ENCODE measurements at regions of chr7 and their contacts with region 1.

Region 1: GRCh38 chr7:27160546-27161213 is 4.2 kb upstream of the HOXA7 start:
- DNase-seq: peak; percentile 91
- ATAC-seq: peak; percentile 84
- H3K4me3 ChIP-seq: peak overlapping the region; percentile 24 to 76 (median 62)
- H3K4me3 Mint-ChIP-seq: peak overlapping the region; percentile 86
- H3K27ac ChIP-seq: no peak overlapping the region
- H3K27ac Mint-ChIP-seq: peak overlapping the region; percentile 67
- H3K4me1 ChIP-seq: peaks cover 49 to 57% of the 10 kb centered on the region in 2 donors
- H3K4me1 Mint-ChIP-seq: peaks cover 38% of the 10 kb centered on the region
- H3K27me3 ChIP-seq: peaks cover 1 to 88% (median 75%) of the 10 kb centered on the region in 4 experiments
- H3K27me3 Mint-ChIP-seq: peaks cover 70% of the 10 kb centered on the region
- CTCF ChIP-seq: peak; percentile 100

Region 2: GRCh38 chr7:25857376-25857921 is 1303.2 kb before region 1 on chr7:
- CTCF ChIA-PET with region 1: interaction called, 4 read pairs
- POLR2A ChIA-PET with region 1: interaction called, 3 read pairs
- intact Hi-C with region 1: loop called (anchors 2 kb)
- DNase-seq: no peak
- ATAC-seq: no peak
- H3K4me3 ChIP-seq: peak overlapping the region in 1 of 5 experiments; percentile 35
- H3K4me3 Mint-ChIP-seq: no peak overlapping the region
- H3K27ac ChIP-seq: no peak overlapping the region
- H3K27ac Mint-ChIP-seq: no peak overlapping the region
- H3K4me1 ChIP-seq: peaks cover 22 to 59% of the 10 kb centered on the region in 2 donors
- H3K4me1 Mint-ChIP-seq: peaks cover 8% of the 10 kb centered on the region
- H3K27me3 ChIP-seq: peaks cover 0 to 95% (median 89%) of the 10 kb centered on the region in 4 experiments
- H3K27me3 Mint-ChIP-seq: peaks cover 37% of the 10 kb centered on the region
- CTCF ChIP-seq: no peak

Region 3: DNA sequence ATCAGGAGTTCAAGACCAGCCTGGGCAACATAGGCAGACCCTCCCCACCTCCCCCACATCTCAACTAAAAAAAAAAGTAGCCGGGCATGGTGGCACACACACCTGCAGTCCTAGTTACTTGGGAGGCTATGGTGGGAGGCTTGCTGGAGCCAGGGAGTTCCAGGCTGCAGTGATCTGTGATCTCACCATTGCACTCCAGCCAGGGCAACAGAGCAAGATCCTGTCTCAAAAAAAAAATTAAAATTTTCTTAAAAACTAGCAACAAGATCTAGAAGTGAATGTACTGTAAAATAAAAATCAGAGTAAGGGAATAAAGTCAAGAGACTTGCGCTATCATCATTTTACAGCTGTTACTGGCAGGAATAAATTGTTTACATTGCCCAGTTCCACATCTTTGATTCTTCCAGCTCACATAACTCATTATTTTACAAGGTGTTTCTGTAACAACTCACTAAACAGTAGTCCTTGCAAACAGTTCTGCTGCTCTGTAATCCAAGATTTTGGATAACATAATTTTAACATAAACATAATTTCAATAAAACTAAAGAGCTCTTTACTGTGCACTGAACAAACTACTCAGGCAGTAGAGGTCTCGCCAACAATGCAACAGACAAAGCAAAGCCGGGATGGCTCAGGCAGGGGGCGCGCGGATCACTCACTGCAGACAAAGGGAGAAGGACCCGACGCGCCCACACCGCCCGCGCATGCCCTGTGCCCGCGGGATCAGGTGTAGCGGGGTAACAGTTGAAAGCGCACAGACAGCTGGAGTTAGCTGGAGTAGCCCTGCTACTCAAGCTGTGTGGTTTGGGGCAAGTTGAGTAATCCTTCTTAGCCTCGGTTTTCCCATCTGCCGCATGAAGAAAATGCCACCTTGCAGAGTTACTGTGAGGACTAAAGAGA is 1082.0 kb before region 1 on chr7:
- CTCF ChIA-PET with region 1: interaction called, 5 read pairs
- POLR2A ChIA-PET with region 1: no interaction called
- intact Hi-C with region 1: loop called (anchors 5 kb)
- DNase-seq: peak; percentile 88
- ATAC-seq: peak; percentile 100
- H3K4me3 ChIP-seq: no peak overlapping the region
- H3K4me3 Mint-ChIP-seq: peak overlapping the region; percentile 35
- H3K27ac ChIP-seq: no peak overlapping the region
- H3K27ac Mint-ChIP-seq: no peak overlapping the region
- H3K4me1 ChIP-seq: peaks cover 6 to 9% of the 10 kb centered on the region in 2 donors
- H3K4me1 Mint-ChIP-seq: peaks cover 9% of the 10 kb centered on the region
- H3K27me3 ChIP-seq: peaks cover 0 to 31% (median 14%) of the 10 kb centered on the region in 4 experiments
- H3K27me3 Mint-ChIP-seq: peaks cover 53% of the 10 kb centered on the region
- CTCF ChIP-seq: peak; percentile 71

Region 4: DNA sequence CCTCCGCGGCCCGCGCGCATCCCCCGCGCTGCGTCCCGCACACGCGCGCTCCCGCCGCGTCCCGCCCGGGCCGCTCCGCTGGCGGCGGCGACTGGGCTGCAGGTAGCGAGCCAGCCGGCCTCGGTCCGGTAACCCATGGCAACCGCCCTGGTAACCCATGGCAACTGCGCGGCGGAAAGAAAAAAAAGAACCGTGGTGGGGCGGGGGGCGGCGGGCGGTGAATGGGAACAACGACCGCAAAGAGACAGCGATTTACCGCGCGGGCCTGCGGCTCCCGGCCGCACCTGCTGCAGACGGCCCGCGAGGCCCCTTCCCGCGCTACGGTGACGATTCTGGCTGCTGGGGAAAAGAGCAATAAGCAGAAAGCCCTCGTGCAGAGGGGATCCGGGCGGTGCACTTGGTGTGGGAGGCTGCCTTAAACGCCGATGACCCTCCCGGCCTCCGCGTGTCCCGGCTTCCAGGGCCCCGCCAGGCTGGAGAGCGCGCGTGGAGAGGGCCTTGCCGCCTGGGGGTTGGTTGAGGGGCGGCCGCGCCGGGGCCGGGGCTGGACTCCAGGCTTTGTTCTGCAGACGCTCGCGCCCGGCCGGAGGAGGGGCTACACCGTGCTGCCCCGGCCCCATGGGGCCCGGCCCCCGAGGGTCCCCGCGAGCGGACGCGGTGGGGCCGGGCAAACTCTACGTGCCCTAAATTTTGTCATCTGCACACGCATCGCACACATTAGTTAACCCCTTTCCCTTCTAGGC is 784.3 kb before region 1 on chr7:
- CTCF ChIA-PET with region 1: interaction called, 122 read pairs
- POLR2A ChIA-PET with region 1: no interaction called
- intact Hi-C with region 1: loop called (anchors 1 kb)
- DNase-seq: peak; percentile 80
- ATAC-seq: peak; percentile 54
- H3K4me3 ChIP-seq: peak overlapping the region; percentile 34 to 69 (median 58)
- H3K4me3 Mint-ChIP-seq: peak overlapping the region; percentile 87
- H3K27ac ChIP-seq: no peak overlapping the region
- H3K27ac Mint-ChIP-seq: no peak overlapping the region
- H3K4me1 ChIP-seq: peaks cover 8 to 9% of the 10 kb centered on the region in 2 donors
- H3K4me1 Mint-ChIP-seq: peaks cover 6% of the 10 kb centered on the region
- H3K27me3 ChIP-seq: peaks cover 0 to 16% (median 2%) of the 10 kb centered on the region in 4 experiments
- H3K27me3 Mint-ChIP-seq: no peaks in the 10 kb centered on the region
- CTCF ChIP-seq: no peak

Region 5: GRCh38 chr7:26686448-26686981 is 474.2 kb before region 1 on chr7:
- CTCF ChIA-PET with region 1: interaction called, 67 read pairs
- POLR2A ChIA-PET with region 1: no interaction called
- intact Hi-C with region 1: loop called (anchors 1 kb)
- DNase-seq: peak; percentile 60
- ATAC-seq: no peak
- H3K4me3 ChIP-seq: no peak overlapping the region
- H3K4me3 Mint-ChIP-seq: no peak overlapping the region
- H3K27ac ChIP-seq: no peak overlapping the region
- H3K27ac Mint-ChIP-seq: no peak overlapping the region
- H3K4me1 ChIP-seq: peaks cover 7 to 14% of the 10 kb centered on the region in 2 donors
- H3K4me1 Mint-ChIP-seq: peaks cover 28% of the 10 kb centered on the region
- H3K27me3 ChIP-seq: no peaks in the 10 kb centered on the region
- H3K27me3 Mint-ChIP-seq: no peaks in the 10 kb centered on the region
- CTCF ChIP-seq: peak; percentile 87

Region 6: GRCh38 chr7:27185013-27185855 is 24.6 kb after region 1 on chr7 and contains the start of gene HOXA11:
- CTCF ChIA-PET with region 1: interaction called, 28 read pairs
- POLR2A ChIA-PET with region 1: no interaction called
- intact Hi-C with region 1: no loop called
- DNase-seq: peak; percentile 62
- ATAC-seq: no peak
- H3K4me3 ChIP-seq: peak within 1 kb of the TSS in 4 of 5 experiments; percentile 11 to 28 (median 19)
- H3K4me3 Mint-ChIP-seq: peak within 1 kb of the TSS; percentile 78
- H3K27ac ChIP-seq: no peak within 1 kb of the TSS
- H3K27ac Mint-ChIP-seq: peak within 1 kb of the TSS; percentile 77
- H3K4me1 ChIP-seq: peaks cover 50 to 71% of the 10 kb centered on the region in 2 donors
- H3K4me1 Mint-ChIP-seq: peaks cover 41% of the 10 kb centered on the region
- H3K27me3 ChIP-seq: peaks cover 0 to 96% (median 80%) of the 10 kb centered on the region in 4 experiments
- H3K27me3 Mint-ChIP-seq: peaks cover 77% of the 10 kb centered on the region
- CTCF ChIP-seq: no peak
- total RNA-seq, gene HOXA11: not detected in 2 replicates

Region 7: GRCh38 chr7:27459021-27459730 is 298.5 kb after region 1 on chr7:
- CTCF ChIA-PET with region 1: no interaction called
- POLR2A ChIA-PET with region 1: no interaction called
- intact Hi-C with region 1: no loop called
- DNase-seq: no peak
- ATAC-seq: no peak
- H3K4me3 ChIP-seq: no peak overlapping the region
- H3K4me3 Mint-ChIP-seq: no peak overlapping the region
- H3K27ac ChIP-seq: no peak overlapping the region
- H3K27ac Mint-ChIP-seq: no peak overlapping the region
- H3K4me1 ChIP-seq: no peaks in the 10 kb centered on the region
- H3K4me1 Mint-ChIP-seq: no peaks in the 10 kb centered on the region
- H3K27me3 ChIP-seq: peaks cover 0 to 3% (median under 1%) of the 10 kb centered on the region in 4 experiments
- H3K27me3 Mint-ChIP-seq: peaks cover 36% of the 10 kb centered on the region
- CTCF ChIP-seq: no peak

Region 8: GRCh38 chr7:28509251-28510022 is 1348.8 kb after region 1 on chr7:
- CTCF ChIA-PET with region 1: no interaction called
- POLR2A ChIA-PET with region 1: no interaction called
- intact Hi-C with region 1: no loop called
- DNase-seq: no peak
- ATAC-seq: peak; percentile 28
- H3K4me3 ChIP-seq: no peak overlapping the region
- H3K4me3 Mint-ChIP-seq: peak overlapping the region; percentile 79
- H3K27ac ChIP-seq: no peak overlapping the region
- H3K27ac Mint-ChIP-seq: peak overlapping the region; percentile 55
- H3K4me1 ChIP-seq: peaks cover 2 to 5% of the 10 kb centered on the region in 2 donors
- H3K4me1 Mint-ChIP-seq: peaks cover 22% of the 10 kb centered on the region
- H3K27me3 ChIP-seq: no peaks in the 10 kb centered on the region
- H3K27me3 Mint-ChIP-seq: peaks cover 8% of the 10 kb centered on the region
- CTCF ChIP-seq: no peak

Measured in B cell (primary cell).